Endothelial cell of umbilical vein (primary cell): ENCODE measurements at regions of chr6 and their contacts with region 1.

Region 1: GRCh38 chr6:45714741-45715507 is 300.7 kb downstream of the CLIC5 start:
- DNase-seq: peak; percentile 80
- H3K4me3 ChIP-seq: no peak overlapping the region
- H3K27ac ChIP-seq: no peak overlapping the region
- H3K4me1 ChIP-seq: no peaks in the 10 kb centered on the region
- H3K27me3 ChIP-seq: peaks cover 5 to 11% of the 10 kb centered on the region in 2 experiments
- CTCF ChIP-seq: peak; percentile 74 to 80
- POLR2A ChIP-seq: no peak

Region 2: DNA sequence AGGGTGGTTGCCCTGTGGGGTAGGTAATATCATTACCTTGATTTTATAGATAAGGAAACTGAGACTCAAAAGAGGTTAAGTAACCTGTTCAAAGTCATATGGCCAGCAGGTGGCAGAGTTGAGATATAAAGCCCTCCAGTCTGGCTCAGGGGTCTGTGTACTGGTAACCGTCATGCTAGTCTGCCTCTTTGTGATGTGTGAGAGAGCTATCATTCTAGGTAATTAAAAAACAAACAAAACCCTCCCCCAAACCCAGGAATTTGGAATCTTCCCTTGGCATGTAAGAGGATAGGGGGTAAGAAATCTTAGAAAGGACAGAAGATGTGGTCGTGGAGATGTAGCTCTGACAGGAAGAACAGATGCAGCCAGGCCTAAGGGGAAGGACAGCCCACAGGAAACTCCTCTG is 1121.4 kb before region 1 on chr6:
- CTCF ChIA-PET with region 1: interaction called, 16 read pairs
- POLR2A ChIA-PET with region 1: no interaction called
- dilution Hi-C with region 1: no loop called
- intact Hi-C with region 1: loop called (anchors 1 kb)
- DNase-seq: peak; percentile 54
- H3K4me3 ChIP-seq: no peak overlapping the region
- H3K27ac ChIP-seq: no peak overlapping the region
- H3K4me1 ChIP-seq: no peaks in the 10 kb centered on the region
- H3K27me3 ChIP-seq: peaks cover 0 to 3% of the 10 kb centered on the region in 2 experiments
- CTCF ChIP-seq: peak; percentile 47 to 54
- POLR2A ChIP-seq: no peak

Region 3: DNA sequence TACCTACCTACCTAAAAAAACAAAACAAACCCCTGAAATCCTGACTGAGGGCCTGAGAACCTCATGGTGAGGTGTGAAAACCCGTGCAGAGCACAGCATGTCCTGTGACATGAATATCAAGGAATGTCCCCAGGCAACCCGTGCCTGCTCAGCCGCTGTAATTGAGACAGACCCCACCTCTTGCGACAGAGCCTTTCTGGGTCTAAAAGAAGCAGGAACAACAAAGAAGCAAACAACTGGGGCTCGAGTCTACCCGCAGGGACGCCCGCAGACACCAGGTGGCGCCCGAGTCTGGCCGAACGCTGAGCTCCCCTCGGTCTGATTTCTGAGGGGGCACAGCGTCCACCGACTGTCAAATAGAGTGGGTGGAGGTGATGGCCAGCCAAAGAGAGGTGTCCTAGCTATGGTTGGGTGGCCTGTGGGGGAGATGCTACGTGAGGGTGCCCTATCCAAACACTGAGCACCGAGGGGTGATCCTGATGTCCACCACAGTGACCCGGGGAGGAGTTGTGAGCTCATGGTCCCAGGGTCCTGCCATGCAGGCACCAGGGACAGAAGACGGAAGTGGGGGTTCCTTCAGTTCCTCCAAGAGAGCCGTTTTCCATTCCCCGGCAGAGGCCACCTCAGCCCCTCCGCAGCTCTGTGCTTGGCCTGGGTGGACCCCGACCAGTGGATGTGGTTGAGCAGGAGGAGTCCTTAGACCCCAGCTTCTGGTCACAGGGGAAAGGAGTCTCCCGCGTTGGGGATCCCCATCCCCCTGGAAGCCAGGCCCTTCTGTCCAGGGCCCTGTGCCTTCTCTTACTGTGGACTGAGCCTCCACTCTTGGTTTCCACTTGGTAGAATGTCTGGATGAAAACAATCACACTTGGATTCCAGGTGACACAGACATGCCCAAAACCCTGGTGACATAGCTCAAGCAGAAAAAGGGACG is 1059.2 kb before region 1 on chr6:
- CTCF ChIA-PET with region 1: interaction called, 282 read pairs
- POLR2A ChIA-PET with region 1: no interaction called
- dilution Hi-C with region 1: no loop called
- intact Hi-C with region 1: loop called (anchors 1 kb)
- DNase-seq: peak; percentile 52
- H3K4me3 ChIP-seq: no peak overlapping the region
- H3K27ac ChIP-seq: no peak overlapping the region
- H3K4me1 ChIP-seq: no peaks in the 10 kb centered on the region
- H3K27me3 ChIP-seq: peaks cover 11 to 23% of the 10 kb centered on the region in 2 experiments
- CTCF ChIP-seq: peak; percentile 88 to 98
- POLR2A ChIP-seq: no peak

Region 4: DNA sequence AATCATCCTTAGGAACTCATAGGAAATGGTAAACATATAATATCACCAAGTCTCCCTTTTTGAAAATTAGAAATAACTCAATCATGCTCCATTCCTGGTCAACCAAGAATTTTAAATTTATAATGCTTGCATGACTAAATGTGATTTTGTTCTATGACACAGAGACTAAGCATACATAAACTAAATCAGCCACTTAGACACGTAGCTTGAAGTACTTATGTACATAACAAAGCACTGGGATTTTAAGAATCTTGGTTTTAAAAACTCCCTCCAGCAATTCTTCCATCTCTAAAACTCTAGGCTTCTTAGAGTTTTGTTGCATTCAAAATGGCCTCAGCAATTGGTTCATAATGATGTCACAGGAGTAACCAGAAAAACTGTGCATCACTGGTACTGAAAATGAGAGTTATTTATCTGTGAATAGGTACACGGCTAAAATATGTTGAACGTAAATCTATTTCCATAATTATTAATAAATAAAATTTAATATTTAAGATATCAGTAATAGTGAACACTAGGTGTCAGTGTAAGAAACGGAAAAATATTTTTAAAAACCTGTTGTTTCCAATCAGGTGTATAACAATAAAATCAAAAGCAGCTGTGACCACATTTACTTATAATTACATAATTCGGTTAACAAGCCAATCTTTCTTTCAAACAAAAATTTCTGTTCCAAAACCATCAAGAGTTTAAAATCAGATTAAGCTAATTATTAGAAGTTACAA is 628.4 kb before region 1 on chr6:
- CTCF ChIA-PET with region 1: interaction called, 47 read pairs
- POLR2A ChIA-PET with region 1: no interaction called
- dilution Hi-C with region 1: no loop called
- intact Hi-C with region 1: loop called (anchors 1 kb)
- DNase-seq: peak; percentile 7
- H3K4me3 ChIP-seq: no peak overlapping the region
- H3K27ac ChIP-seq: no peak overlapping the region
- H3K4me1 ChIP-seq: no peaks in the 10 kb centered on the region
- H3K27me3 ChIP-seq: no peaks in the 10 kb centered on the region
- CTCF ChIP-seq: no peak
- POLR2A ChIP-seq: no peak

Region 5: DNA sequence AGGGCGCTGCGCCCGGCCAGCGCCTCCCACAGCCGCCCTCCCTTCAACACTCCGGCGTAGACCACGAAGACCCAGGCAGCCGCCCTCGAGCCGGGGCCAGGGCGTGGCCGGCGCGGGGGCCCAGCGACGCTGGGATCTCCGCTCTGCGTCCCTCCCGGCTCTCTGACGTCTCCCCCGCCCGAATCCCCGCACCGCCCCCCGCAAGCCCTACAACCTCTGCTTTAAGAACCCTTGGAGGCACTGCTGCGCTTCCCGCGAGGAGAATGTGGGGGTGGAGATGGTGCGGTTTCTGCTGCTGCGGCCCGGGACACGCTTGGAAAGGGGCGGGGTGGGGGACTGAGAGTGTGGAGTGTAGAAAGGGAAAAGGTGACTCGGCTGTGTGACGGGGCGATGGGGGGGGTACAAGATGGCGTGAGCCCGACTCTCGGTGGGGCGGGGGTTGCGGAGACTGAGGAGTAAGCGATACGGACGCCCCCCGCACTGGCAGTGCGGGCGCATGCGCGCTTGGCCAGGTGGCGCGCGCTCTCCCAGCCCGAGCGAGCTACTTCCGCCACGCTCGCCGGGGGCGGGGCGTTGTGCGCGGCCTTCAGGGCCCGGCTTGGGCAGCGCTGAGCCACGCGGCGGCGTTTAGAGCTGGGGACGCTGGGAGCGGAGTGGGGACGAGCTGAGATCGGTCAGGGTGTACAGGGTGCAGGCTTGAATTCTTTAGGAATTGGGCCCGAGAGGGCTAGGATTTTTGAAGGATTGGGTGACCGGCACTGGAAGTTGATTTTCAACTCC is 337.2 kb before region 1 on chr6 and contains the start of gene SUPT3H:
- CTCF ChIA-PET with region 1: interaction called, 49 read pairs
- POLR2A ChIA-PET with region 1: interaction called, 3 read pairs
- dilution Hi-C with region 1: no loop called
- intact Hi-C with region 1: loop called (anchors 1 kb)
- DNase-seq: peak; percentile 94
- H3K4me3 ChIP-seq: peak within 1 kb of the TSS; percentile 76 to 92 (median 79)
- H3K27ac ChIP-seq: peak within 1 kb of the TSS; percentile 91
- H3K4me1 ChIP-seq: peaks cover 8% of the 10 kb centered on the region
- H3K27me3 ChIP-seq: no peaks in the 10 kb centered on the region
- CTCF ChIP-seq: peak in 1 of 2 donors; percentile 26
- POLR2A ChIP-seq: peak; percentile 87
- total RNA-seq, gene SUPT3H: 8.4 and 9.8 TPM in 2 replicates

Region 6: GRCh38 chr6:45504947-45505346 is 210.0 kb before region 1 on chr6:
- CTCF ChIA-PET with region 1: interaction called, 5 read pairs
- POLR2A ChIA-PET with region 1: no interaction called
- dilution Hi-C with region 1: no loop called
- intact Hi-C with region 1: loop called (anchors 5 kb)
- DNase-seq: peak; percentile 50
- H3K4me3 ChIP-seq: no peak overlapping the region
- H3K27ac ChIP-seq: no peak overlapping the region
- H3K4me1 ChIP-seq: peaks cover 5% of the 10 kb centered on the region
- H3K27me3 ChIP-seq: no peaks in the 10 kb centered on the region
- CTCF ChIP-seq: no peak
- POLR2A ChIP-seq: no peak

Region 7: DNA sequence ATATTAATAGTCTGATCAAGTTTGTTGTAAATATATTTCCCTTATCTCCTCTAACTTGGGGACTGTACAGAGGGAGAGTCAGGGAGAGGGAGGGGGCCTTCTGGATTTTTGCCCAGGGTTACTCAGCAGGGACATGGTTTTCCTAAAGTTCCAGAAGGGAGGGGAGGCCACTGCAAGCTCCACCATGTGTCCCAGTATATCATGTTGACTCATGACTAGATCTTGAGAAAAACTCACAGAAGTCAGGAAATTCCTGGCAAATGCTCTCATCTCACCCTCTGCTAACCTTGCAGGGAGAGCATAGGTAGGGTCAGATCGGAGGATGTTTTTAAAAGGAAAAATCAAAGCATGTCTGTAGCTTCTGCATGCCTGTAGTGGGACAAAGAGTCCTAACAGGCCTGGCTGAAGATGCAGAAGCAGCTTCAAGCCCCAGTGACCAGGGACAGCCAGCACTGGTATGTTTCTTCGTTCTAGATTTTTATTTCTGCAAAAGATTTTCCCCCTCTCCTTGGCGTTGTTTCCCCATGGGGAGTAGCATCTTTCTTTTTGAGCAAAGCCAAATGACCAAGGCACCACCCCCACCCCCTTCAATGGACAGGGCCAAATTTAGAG is 64.3 kb before region 1 on chr6:
- CTCF ChIA-PET with region 1: interaction called, 20 read pairs
- POLR2A ChIA-PET with region 1: no interaction called
- dilution Hi-C with region 1: no loop called
- intact Hi-C with region 1: loop called (anchors 2 kb)
- DNase-seq: peak; percentile 89
- H3K4me3 ChIP-seq: no peak overlapping the region
- H3K27ac ChIP-seq: peak overlapping the region; percentile 26
- H3K4me1 ChIP-seq: peaks cover 41% of the 10 kb centered on the region
- H3K27me3 ChIP-seq: no peaks in the 10 kb centered on the region
- CTCF ChIP-seq: no peak
- POLR2A ChIP-seq: peak; percentile 64

Region 8: GRCh38 chr6:46138281-46138680 is 423.4 kb after region 1 on chr6:
- CTCF ChIA-PET with region 1: no interaction called
- POLR2A ChIA-PET with region 1: no interaction called
- dilution Hi-C with region 1: no loop called
- intact Hi-C with region 1: no loop called
- DNase-seq: no peak
- H3K4me3 ChIP-seq: no peak overlapping the region
- H3K27ac ChIP-seq: no peak overlapping the region
- H3K4me1 ChIP-seq: no peaks in the 10 kb centered on the region
- H3K27me3 ChIP-seq: peaks cover 0 to 2% of the 10 kb centered on the region in 2 experiments
- CTCF ChIP-seq: no peak
- POLR2A ChIP-seq: no peak